HCT116 (cell line): ENCODE measurements at regions of chr15 and their contacts with region 1.

Region 1: DNA sequence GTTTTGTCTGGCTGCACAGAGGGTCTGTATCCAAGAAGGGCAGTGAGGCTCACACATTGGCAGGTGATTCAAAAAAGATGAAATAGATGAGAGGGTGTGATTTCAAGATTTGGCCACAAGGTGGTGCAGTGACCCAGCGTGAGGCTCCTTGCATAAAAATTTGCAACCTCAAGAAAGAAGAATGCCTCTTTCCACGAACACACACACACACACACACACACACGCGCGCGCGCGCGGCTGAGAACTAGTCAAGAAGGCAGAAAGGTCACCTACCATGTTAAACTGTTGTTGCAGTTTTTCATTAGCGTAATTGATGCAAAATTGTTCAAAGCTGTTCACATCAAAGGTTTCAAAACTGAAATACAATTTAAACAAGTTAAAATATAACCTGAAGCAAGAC is 39.2 kb downstream of the MYO5C start:
- DNase-seq: peak; percentile 62
- ATAC-seq: peak; percentile 63
- H3K4me3 ChIP-seq: no peak overlapping the region
- H3K27ac ChIP-seq: no peak overlapping the region
- H3K4me1 ChIP-seq: peaks cover 13 to 42% of the 10 kb centered on the region in 2 experiments
- H3K27me3 ChIP-seq: no peaks in the 10 kb centered on the region
- CTCF ChIP-seq: peak; percentile 59 to 74 (median 66); a peak in 5 of 6 replicates
- POLR2A ChIP-seq: no peak
- RAD21 ChIP-seq: peak; percentile 85

Region 2: DNA sequence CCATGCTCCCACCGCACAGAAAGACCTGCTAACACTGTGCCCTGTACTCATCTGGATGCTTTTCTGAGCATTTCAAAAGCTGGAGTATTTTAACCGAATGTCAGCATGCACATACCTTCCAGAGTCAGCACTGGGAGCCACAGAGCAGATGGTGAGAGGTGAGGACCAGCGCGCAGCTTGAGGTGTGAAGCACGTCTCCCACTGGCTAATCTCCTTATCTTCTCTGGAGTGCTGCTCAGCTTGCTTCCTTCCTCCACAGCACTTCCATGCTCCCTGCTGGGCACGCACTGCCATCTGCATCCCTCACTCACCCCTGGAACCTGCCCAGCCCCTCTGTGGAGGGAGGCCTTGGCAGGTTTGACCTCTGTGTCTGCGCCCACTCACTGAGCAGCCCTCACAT is 65.2 kb before region 1 on chr15 and contains the start of gene GNB5:
- CTCF ChIA-PET with region 1: no interaction called
- POLR2A ChIA-PET with region 1: no interaction called
- RAD21 ChIA-PET with region 1: no interaction called
- intact Hi-C with region 1: no loop called
- DNase-seq: no peak
- ATAC-seq: no peak
- H3K4me3 ChIP-seq: no peak within 1 kb of the TSS
- H3K27ac ChIP-seq: no peak within 1 kb of the TSS
- H3K4me1 ChIP-seq: no peaks in the 10 kb centered on the region
- H3K27me3 ChIP-seq: no peaks in the 10 kb centered on the region
- CTCF ChIP-seq: no peak
- POLR2A ChIP-seq: no peak
- RAD21 ChIP-seq: no peak
- total RNA-seq, gene GNB5: 27.6 TPM

Region 3: GRCh38 chr15:52295421-52296001 is 39.1 kb after region 1 on chr15 and contains the start of gene MYO5C:
- CTCF ChIA-PET with region 1: no interaction called
- POLR2A ChIA-PET with region 1: no interaction called
- RAD21 ChIA-PET with region 1: no interaction called
- intact Hi-C with region 1: loop called (anchors 5 kb)
- DNase-seq: peak; percentile 64
- ATAC-seq: peak; percentile 97
- H3K4me3 ChIP-seq: peak within 1 kb of the TSS; percentile 73 to 82
- H3K27ac ChIP-seq: peak within 1 kb of the TSS; percentile 62; the same call in 1 of the 2 replicates
- H3K4me1 ChIP-seq: peaks cover 5 to 18% of the 10 kb centered on the region in 2 experiments; a peak in 3 of 4 replicates
- H3K27me3 ChIP-seq: no peaks in the 10 kb centered on the region
- CTCF ChIP-seq: no peak
- POLR2A ChIP-seq: peak; percentile 47
- RAD21 ChIP-seq: no peak
- total RNA-seq, gene MYO5C: 34.0 TPM

Region 4: DNA sequence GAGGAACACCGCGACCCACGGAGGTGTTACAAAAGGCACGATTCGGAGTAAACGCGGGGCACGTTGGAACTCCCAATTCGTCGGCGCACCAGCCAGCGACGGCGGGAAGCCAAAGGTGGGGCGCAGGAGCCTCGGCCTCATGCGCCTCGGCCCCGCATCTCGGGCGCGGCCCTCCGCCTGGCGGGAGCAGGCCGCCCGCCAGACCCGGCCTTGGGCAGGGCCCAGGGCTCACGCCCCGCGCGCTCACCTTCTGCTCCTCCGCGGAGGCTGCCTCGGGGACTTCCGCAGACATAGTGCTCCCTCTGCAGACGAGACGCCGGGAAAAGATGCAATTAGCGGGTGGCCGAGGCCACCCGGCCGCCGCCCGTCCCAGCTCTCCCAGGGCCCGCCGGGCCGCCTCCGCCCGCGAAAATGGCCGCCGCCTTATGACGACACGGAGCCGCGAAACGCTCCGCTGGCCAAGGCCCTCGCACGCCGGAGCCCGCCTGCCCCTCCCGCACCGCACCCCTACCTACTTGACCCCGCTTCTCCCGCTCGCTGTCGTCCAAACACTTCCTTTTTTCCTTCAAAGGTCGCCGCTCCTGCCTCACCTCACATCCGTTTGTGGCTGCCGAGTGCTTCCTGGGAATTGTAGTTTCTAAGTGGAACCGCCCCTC is 312.4 kb after region 1 on chr15 and contains the start of gene ARPP19:
- CTCF ChIA-PET with region 1: no interaction called
- POLR2A ChIA-PET with region 1: no interaction called
- RAD21 ChIA-PET with region 1: no interaction called
- intact Hi-C with region 1: loop called (anchors 10 kb)
- DNase-seq: peak; percentile 95
- ATAC-seq: peak; percentile 93
- H3K4me3 ChIP-seq: peak within 1 kb of the TSS; percentile 91 to 98
- H3K27ac ChIP-seq: peak within 1 kb of the TSS; percentile 91
- H3K4me1 ChIP-seq: peaks cover 8 to 16% of the 10 kb centered on the region in 2 experiments
- H3K27me3 ChIP-seq: no peaks in the 10 kb centered on the region
- CTCF ChIP-seq: no peak
- POLR2A ChIP-seq: peak; percentile 40
- RAD21 ChIP-seq: no peak
- total RNA-seq, gene ARPP19: 163 TPM

Region 5: DNA sequence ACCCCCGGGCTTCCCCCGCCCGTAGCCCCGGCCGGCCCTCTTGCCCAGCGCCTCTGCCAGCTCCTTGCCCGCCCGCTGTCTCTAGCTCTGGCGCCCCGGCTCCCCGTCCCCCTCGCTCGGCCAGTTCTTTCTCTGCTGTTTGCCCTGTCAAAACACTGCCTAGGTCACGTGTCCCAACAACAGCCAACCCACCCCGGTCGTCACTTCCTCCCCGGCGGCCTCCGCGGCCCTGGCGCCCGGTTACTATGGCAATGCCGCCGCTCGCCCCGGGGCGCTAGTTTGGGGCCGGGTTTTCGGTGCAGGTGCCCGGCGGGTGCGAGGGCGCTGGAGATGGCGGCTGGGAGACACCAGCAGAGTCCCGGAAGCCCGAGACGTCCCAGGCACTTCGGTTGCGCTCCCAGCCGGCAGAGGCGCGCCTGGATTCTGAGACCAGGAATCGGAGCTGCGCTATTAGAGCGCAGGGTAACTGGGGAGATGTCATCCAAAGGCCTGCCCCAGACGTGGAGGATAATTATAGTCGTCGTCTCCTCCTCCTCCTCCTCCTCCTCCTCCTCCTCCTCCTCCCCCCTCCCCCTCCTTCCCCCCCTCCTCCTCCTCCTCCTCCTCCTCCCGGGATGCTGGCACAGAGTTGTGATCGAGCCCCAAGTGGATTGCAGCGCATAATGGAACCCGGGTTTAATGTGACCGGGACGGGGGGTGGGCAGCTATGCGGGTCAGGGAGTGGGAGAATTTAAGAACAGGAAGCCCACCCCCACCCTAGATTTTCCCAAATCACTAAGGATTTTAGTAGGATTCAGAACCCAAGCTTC is 423.1 kb after region 1 on chr15 and contains the start of gene ATOSA:
- CTCF ChIA-PET with region 1: no interaction called
- POLR2A ChIA-PET with region 1: no interaction called
- RAD21 ChIA-PET with region 1: no interaction called
- intact Hi-C with region 1: loop called (anchors 2 kb)
- DNase-seq: peak; percentile 69
- ATAC-seq: peak; percentile 87
- H3K4me3 ChIP-seq: peak within 1 kb of the TSS; percentile 70 to 74
- H3K27ac ChIP-seq: peak within 1 kb of the TSS; percentile 78
- H3K4me1 ChIP-seq: peaks cover 11 to 13% of the 10 kb centered on the region in 2 experiments
- H3K27me3 ChIP-seq: no peaks in the 10 kb centered on the region
- CTCF ChIP-seq: no peak
- POLR2A ChIP-seq: peak; percentile 33
- RAD21 ChIP-seq: no peak
- total RNA-seq, gene ATOSA: 4.7 TPM